Left ventricle myocardium superior (tissue), 1 donor: ENCODE measurements at regions of chr1 and their contacts with region 1.

Region 1: GRCh38 chr1:180533266-180533987 is 25.3 kb upstream of the OVAAL start:
- DNase-seq: peak; percentile 75
- ATAC-seq: peak; percentile 86

Region 2: GRCh38 chr1:180631766-180632325 is 98.4 kb after region 1 on chr1 and contains the start of gene XPR1:
- intact Hi-C with region 1: loop called (anchors 10 kb)
- DNase-seq: peak; percentile 97
- ATAC-seq: peak; percentile 97
- total RNA-seq, gene XPR1: 43.8 TPM

Region 3: GRCh38 chr1:180863158-180863775 is 329.8 kb after region 1 on chr1:
- intact Hi-C with region 1: loop called (anchors 5 kb)
- DNase-seq: no peak
- ATAC-seq: peak; percentile 33